Activated B cell treated with CpG ODN at 0.5 μM for 24 hours (primary cell): ENCODE measurements at regions of chr3 and their contacts with region 1.

Region 1: GRCh38 chr3:170128977-170129431 is 52.5 kb downstream of the PHC3 start:
- DNase-seq: no peak
- ATAC-seq: peak; percentile 56
- H3K4me3 Mint-ChIP-seq: peak overlapping the region; percentile 9
- H3K27ac Mint-ChIP-seq: peak overlapping the region; percentile 57
- H3K4me1 Mint-ChIP-seq: peaks cover 20% of the 10 kb centered on the region
- H3K27me3 Mint-ChIP-seq: no peaks in the 10 kb centered on the region
- CTCF ChIP-seq: no peak

Region 2: GRCh38 chr3:170033489-170033888 is 95.5 kb before region 1 on chr3:
- CTCF ChIA-PET with region 1: no interaction called
- POLR2A ChIA-PET with region 1: no interaction called
- intact Hi-C with region 1: no loop called
- DNase-seq: no peak
- ATAC-seq: no peak
- H3K4me3 Mint-ChIP-seq: no peak overlapping the region
- H3K27ac Mint-ChIP-seq: no peak overlapping the region
- H3K4me1 Mint-ChIP-seq: peaks cover 10% of the 10 kb centered on the region
- H3K27me3 Mint-ChIP-seq: no peaks in the 10 kb centered on the region
- CTCF ChIP-seq: no peak

Region 3: GRCh38 chr3:170089862-170090600 is 39.0 kb before region 1 on chr3:
- CTCF ChIA-PET with region 1: no interaction called
- POLR2A ChIA-PET with region 1: no interaction called
- intact Hi-C with region 1: loop called (anchors 5 kb)
- DNase-seq: no peak
- ATAC-seq: no peak
- H3K4me3 Mint-ChIP-seq: no peak overlapping the region
- H3K27ac Mint-ChIP-seq: no peak overlapping the region
- H3K4me1 Mint-ChIP-seq: no peaks in the 10 kb centered on the region
- H3K27me3 Mint-ChIP-seq: no peaks in the 10 kb centered on the region
- CTCF ChIP-seq: no peak

Region 4: GRCh38 chr3:170205302-170205701 is 76.3 kb after region 1 on chr3:
- CTCF ChIA-PET with region 1: no interaction called
- POLR2A ChIA-PET with region 1: no interaction called
- intact Hi-C with region 1: no loop called
- DNase-seq: no peak
- ATAC-seq: no peak
- H3K4me3 Mint-ChIP-seq: no peak overlapping the region
- H3K27ac Mint-ChIP-seq: no peak overlapping the region
- H3K4me1 Mint-ChIP-seq: no peaks in the 10 kb centered on the region
- H3K27me3 Mint-ChIP-seq: peaks cover 24% of the 10 kb centered on the region
- CTCF ChIP-seq: no peak

Region 5: DNA sequence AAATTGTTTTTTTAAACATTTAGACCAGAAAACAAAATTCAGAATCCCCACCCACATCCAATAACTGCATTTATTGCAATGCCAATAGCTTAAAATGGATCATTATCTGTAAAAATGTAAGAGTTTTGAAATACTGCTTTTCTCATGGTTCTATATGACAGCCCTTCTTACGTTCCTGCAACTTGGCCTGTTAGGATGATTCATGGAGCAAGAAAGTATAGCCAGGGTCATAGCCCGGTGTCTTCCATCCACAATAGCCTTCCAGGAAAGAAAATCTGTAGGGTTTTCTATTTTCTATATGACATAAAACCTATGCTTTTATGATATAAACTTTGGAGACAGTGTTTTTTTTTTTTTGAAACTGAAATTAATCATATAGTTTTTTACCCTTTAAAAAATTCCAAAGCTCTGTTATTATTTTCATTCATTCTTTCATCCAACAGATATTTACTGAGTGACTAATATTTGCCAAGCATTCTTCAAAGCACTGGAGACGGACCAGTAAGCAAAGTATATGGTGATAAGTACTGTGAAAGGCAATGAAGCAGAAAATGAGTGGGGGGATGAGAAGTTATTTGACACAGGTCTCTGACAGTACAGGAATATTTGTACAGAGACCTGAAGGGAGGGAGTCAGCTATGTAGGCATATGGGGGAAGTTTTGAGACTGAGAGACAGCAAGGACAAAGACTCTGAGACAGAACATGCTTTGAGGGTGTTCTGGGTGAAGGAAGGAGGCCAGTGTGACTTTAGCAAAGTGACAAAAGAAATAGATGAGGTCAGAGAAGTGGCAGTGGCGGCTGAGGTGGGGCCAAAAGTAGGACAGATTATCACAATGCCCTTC is 926.6 kb after region 1 on chr3:
- CTCF ChIA-PET with region 1: no interaction called
- POLR2A ChIA-PET with region 1: no interaction called
- intact Hi-C with region 1: no loop called
- DNase-seq: no peak
- ATAC-seq: no peak
- H3K4me3 Mint-ChIP-seq: no peak overlapping the region
- H3K27ac Mint-ChIP-seq: no peak overlapping the region
- H3K4me1 Mint-ChIP-seq: no peaks in the 10 kb centered on the region
- H3K27me3 Mint-ChIP-seq: no peaks in the 10 kb centered on the region
- CTCF ChIP-seq: no peak